ENCODE measurements at regions of chrX and their contacts with region 1.

Region 1: GRCh38 chrX:12701628-12702027 is 89.6 kb upstream of the PRPS2 start:
- DNase-seq: peak; percentile 42
- ATAC-seq: peak; percentile 68

Region 2: GRCh38 chrX:12076046-12076445 is 625.6 kb before region 1 on chrX:
- intact Hi-C with region 1: loop called (anchors 10 kb)
- DNase-seq: no peak
- ATAC-seq: no peak